Activated CD4-positive, alpha-beta memory T cell treated with anti-CD3 and anti-CD28 coated beads for 36 hours (primary cell): ENCODE measurements at regions of chr1 and their contacts with region 1.

Region 1: GRCh38 chr1:209710093-209710492 is 5.4 kb downstream of the HSD11B1 start:
- DNase-seq: peak; percentile 62
- H3K4me3 Mint-ChIP-seq: peak overlapping the region; percentile 60
- H3K27ac Mint-ChIP-seq: peak overlapping the region; percentile 91
- H3K4me1 Mint-ChIP-seq: peaks cover 76% of the 10 kb centered on the region
- H3K27me3 Mint-ChIP-seq: no peaks in the 10 kb centered on the region

Region 2: DNA sequence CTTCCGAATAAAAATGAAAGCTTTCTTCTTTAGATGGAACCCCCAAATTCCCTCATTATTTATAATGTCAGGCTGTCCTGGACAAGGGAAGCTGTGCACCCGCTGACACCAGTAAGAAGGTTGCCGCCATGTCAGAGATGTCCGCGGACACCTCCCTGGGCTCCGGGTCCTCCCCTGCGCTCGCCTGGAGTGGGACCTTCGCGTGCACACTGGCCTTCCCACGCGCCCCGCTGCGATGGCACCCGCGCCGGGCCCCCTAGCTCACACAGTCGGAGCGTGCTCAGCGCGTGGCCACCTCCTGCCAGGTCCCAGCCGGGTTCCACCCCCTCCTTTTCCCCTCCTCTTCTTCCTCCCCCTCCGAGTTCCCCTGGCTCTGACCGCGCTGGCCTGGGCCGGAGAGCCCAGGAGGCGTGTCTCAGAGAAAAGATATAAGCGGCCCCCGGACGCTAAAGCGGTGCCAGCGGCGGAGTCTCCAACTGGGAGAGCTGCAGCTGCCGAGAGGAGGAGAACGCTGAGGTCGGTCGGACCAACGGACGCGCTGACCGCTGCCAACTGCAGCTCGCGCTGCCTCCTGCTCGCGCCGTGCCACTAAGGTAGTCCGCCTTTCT is 35.0 kb before region 1 on chr1 and contains the start of gene G0S2:
- CTCF ChIA-PET with region 1: no interaction called
- POLR2A ChIA-PET with region 1: interaction called, 4 read pairs
- intact Hi-C with region 1: loop called (anchors 2 kb)
- DNase-seq: peak; percentile 66
- H3K4me3 Mint-ChIP-seq: peak within 1 kb of the TSS; percentile 76
- H3K27ac Mint-ChIP-seq: peak within 1 kb of the TSS; percentile 68
- H3K4me1 Mint-ChIP-seq: peaks cover 68% of the 10 kb centered on the region
- H3K27me3 Mint-ChIP-seq: peaks cover 22% of the 10 kb centered on the region
- total RNA-seq, gene G0S2: 92.7 to 93.1 TPM

Region 3: GRCh38 chr1:209723756-209724693 is 13.9 kb after region 1 on chr1:
- CTCF ChIA-PET with region 1: interaction called, 4 read pairs
- POLR2A ChIA-PET with region 1: interaction called, 24 read pairs
- intact Hi-C with region 1: loop called (anchors 1 kb)
- DNase-seq: peak; percentile 79
- H3K4me3 Mint-ChIP-seq: peak overlapping the region; percentile 54
- H3K27ac Mint-ChIP-seq: peak overlapping the region; percentile 96
- H3K4me1 Mint-ChIP-seq: peaks cover 74% of the 10 kb centered on the region
- H3K27me3 Mint-ChIP-seq: no peaks in the 10 kb centered on the region

Region 4: GRCh38 chr1:209733409-209734192 is 23.5 kb after region 1 on chr1:
- CTCF ChIA-PET with region 1: interaction called, 3 read pairs
- POLR2A ChIA-PET with region 1: interaction called, 23 read pairs
- intact Hi-C with region 1: loop called (anchors 1 kb)
- DNase-seq: no peak
- H3K4me3 Mint-ChIP-seq: peak overlapping the region; percentile 54
- H3K27ac Mint-ChIP-seq: peak overlapping the region; percentile 75
- H3K4me1 Mint-ChIP-seq: peaks cover 49% of the 10 kb centered on the region
- H3K27me3 Mint-ChIP-seq: no peaks in the 10 kb centered on the region